Activated T-helper 1 cell treated with anti-CD3 and anti-CD28 coated beads, Interleukin-12 subunit alpha, Interleukin-12 subunit beta, Interleukin-2, Interleukin-4 antibody, amounts not matched to agents 30 ng/mL and 10 ng/mL and 1 ng/mL, durations not matched to agents 14 hours and 24 hours and 36 hours (primary cell): ENCODE measurements at regions of chr11 and their contacts with region 1.

Region 1: DNA sequence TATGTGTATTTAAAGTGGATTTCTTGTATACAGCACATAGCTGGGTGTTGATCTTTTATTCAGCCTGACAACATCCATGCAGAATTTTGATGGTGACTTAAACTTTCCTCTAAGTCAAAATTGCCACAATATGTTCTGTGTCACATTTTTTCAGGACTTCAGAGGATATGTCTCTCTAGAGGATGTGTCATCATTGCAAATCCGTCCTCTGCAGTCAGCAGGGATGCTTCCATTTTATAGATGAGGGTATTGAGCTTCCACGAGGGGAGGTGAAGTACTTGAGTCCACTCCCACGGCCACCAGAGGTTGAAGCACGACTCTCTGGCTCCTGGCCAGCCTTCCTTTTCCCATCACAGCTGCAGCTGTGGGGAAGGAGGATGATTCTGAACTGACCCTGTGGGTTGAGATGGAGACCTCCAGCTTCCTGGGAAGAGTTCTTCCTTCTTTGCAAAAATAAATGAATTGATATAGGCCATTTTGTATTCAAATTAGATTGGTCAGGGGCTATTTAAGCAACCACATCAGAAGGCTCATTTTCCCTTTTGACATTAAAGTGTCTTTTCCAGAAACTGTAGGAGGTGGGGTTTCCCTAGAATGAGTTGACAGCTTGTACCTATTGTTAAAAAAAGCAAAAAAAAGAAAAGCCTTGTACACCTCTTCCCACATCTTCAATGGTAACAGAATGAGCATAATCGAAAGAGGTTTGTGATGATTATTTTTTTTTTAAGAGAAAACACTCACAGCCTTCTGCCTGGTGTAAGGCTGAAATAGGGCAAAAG is 55.2 kb upstream of the MYEOV start:
- DNase-seq: no peak
- H3K4me3 Mint-ChIP-seq: peak overlapping the region; percentile 55
- H3K27ac Mint-ChIP-seq: peak overlapping the region; percentile 94
- H3K4me1 Mint-ChIP-seq: peaks cover 34% of the 10 kb centered on the region
- H3K27me3 Mint-ChIP-seq: peaks cover 6% of the 10 kb centered on the region

Region 2: DNA sequence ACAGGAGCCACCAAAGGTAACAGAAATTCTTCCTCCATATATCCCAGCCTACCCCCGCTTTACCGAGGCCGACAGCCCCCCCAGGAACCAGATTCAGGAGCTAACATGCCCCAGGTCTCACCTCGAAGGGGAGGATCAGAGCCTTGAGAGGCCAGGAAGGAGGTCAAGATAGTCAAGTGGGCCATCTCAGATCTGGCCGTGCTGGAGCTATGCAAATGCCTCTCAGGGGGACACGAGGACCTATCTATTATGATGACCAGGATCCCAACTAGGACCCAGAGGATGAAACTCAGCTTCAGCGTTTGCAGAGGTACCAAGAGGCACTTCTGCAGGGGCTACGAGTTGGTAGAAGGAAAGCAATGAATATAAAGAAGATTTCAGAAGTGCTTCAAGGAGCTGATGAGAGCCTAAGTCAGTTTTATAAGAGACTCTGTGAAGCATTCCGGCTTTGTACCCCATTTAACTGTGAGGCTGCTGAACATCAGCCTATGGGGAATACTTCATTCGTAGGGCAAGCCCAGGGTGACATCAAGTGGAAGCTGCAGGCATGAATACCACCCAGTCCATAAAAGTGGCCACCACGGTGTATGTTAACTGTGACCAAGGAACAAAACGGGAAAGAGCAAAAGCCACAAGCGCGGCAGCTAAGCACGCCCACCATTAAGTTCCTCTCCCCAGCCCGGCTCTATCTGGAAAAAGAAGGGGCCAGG is 369.4 kb before region 1 on chr11:
- intact Hi-C with region 1: no loop called
- DNase-seq: no peak
- H3K4me3 Mint-ChIP-seq: peak overlapping the region; percentile 68
- H3K27ac Mint-ChIP-seq: no peak overlapping the region
- H3K4me1 Mint-ChIP-seq: peaks cover 10% of the 10 kb centered on the region
- H3K27me3 Mint-ChIP-seq: peaks cover 28% of the 10 kb centered on the region

Region 3: DNA sequence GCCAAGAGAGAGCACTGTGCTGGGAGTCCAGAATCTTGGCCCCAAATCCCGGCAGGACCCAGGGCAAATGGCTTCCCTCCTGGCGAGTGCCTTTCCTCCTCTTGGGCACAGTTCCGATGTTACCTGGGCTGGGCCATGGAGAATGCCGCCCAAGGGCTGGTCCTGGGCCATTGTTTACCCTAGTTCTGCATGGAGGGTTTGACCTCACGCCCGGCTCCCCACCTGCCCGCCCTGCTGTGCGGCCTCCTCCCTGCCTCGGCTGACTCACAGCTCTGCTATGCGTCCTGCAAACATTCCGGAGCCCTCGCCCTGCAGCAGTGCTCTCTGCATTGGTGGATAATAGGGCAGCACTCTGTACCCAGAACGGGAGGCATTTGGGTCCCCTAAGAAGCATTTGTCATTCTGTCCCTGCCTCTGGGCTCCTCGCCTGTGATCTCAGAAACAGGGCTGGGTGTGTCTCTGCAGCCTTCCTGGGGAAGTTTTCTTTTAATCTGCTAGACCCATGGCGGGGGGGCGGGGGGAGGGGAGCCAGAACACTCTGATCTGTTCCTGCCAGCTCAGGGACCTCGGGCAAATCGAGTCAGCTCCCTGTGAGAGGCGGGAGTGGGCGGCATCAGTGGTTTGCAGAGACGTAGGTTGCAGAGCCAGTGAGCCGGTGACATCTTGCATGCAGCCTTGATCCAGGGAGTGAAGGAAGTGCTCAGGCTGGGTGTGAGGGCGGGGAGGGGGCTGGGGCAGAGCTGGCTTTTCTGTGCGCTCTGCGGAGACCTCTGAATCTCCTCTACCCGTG is 115.9 kb before region 1 on chr11:
- intact Hi-C with region 1: loop called (anchors 1 kb)
- DNase-seq: peak; percentile 40
- H3K4me3 Mint-ChIP-seq: peak overlapping the region; percentile 59
- H3K27ac Mint-ChIP-seq: peak overlapping the region; percentile 5
- H3K4me1 Mint-ChIP-seq: peaks cover 36% of the 10 kb centered on the region
- H3K27me3 Mint-ChIP-seq: peaks cover 2% of the 10 kb centered on the region

Region 4: GRCh38 chr11:69213316-69213715 is 25.4 kb before region 1 on chr11:
- intact Hi-C with region 1: loop called (anchors 1 kb)
- DNase-seq: no peak
- H3K4me3 Mint-ChIP-seq: no peak overlapping the region
- H3K27ac Mint-ChIP-seq: peak overlapping the region; percentile 4
- H3K4me1 Mint-ChIP-seq: peaks cover 22% of the 10 kb centered on the region
- H3K27me3 Mint-ChIP-seq: no peaks in the 10 kb centered on the region

Region 5: GRCh38 chr11:69317401-69318092 is 78.8 kb after region 1 on chr11:
- intact Hi-C with region 1: loop called (anchors 1 kb)
- DNase-seq: no peak
- H3K4me3 Mint-ChIP-seq: peak overlapping the region; percentile 9
- H3K27ac Mint-ChIP-seq: peak overlapping the region; percentile 92
- H3K4me1 Mint-ChIP-seq: peaks cover 30% of the 10 kb centered on the region
- H3K27me3 Mint-ChIP-seq: no peaks in the 10 kb centered on the region

Region 6: DNA sequence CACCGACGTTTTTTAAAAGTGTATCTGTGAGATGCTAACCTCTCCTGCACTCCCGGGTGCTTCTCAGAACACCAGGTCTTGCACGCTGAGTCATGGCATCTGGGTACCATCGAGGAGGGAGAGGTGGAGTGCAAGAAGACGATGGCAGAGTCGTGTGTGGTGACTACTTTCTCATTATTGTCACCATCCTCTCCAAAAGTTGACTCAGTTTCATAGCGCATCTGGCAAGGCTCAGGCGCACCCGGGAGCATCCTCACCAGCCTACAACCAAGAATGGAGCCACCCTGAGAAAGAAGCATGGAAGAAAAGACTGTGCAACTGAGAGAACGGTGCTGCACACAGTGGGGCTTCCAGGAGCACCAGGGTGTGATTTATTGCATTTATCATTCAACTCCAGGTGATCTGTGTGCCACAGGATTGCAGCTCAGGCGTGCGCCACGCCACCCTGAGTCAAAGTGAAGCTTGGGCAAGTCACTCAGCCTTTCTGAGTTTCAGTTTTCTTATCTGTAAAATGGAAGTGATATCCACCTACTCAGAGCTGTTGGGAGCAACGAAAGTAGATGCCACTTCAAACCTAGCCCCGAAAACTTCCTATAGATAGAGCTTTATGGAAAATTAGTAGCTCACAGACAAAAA is 308.1 kb after region 1 on chr11:
- intact Hi-C with region 1: loop called (anchors 2 kb)
- DNase-seq: no peak
- H3K4me3 Mint-ChIP-seq: no peak overlapping the region
- H3K27ac Mint-ChIP-seq: no peak overlapping the region
- H3K4me1 Mint-ChIP-seq: peaks cover 10% of the 10 kb centered on the region
- H3K27me3 Mint-ChIP-seq: peaks cover 9% of the 10 kb centered on the region

Region 7: DNA sequence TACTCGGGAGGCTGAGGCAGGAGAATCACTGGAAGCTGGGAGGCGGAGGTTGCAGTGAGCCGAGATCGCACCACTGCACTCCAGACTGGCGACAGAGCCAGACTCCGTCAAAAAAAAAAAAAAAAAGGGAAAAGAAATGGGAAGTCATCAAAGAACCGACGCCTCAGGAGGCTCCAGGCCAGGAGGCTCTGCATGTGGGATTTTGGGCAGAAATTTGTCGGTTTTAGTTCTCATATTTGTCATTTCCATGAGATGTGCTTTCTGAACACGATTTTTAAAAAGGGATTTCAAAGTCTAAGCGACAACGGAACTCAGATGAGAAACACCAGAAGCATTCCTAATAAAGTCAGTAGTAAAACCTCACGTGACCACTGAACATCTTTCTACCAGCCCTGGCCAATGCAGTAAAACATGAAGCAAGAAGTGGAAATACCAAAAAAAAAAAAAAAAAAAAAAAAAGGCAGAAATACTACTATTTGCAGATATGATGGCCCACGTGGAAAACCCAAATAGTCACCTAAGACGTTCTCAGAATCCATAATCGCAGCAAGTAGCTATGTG is 437.1 kb after region 1 on chr11:
- intact Hi-C with region 1: loop called (anchors 1 kb)
- DNase-seq: no peak
- H3K4me3 Mint-ChIP-seq: peak overlapping the region; percentile 97
- H3K27ac Mint-ChIP-seq: no peak overlapping the region
- H3K4me1 Mint-ChIP-seq: peaks cover 20% of the 10 kb centered on the region
- H3K27me3 Mint-ChIP-seq: peaks cover 7% of the 10 kb centered on the region